Endothelial cell of umbilical vein (primary cell): ENCODE measurements at regions of chr3 and their contacts with region 1.

Region 1: DNA sequence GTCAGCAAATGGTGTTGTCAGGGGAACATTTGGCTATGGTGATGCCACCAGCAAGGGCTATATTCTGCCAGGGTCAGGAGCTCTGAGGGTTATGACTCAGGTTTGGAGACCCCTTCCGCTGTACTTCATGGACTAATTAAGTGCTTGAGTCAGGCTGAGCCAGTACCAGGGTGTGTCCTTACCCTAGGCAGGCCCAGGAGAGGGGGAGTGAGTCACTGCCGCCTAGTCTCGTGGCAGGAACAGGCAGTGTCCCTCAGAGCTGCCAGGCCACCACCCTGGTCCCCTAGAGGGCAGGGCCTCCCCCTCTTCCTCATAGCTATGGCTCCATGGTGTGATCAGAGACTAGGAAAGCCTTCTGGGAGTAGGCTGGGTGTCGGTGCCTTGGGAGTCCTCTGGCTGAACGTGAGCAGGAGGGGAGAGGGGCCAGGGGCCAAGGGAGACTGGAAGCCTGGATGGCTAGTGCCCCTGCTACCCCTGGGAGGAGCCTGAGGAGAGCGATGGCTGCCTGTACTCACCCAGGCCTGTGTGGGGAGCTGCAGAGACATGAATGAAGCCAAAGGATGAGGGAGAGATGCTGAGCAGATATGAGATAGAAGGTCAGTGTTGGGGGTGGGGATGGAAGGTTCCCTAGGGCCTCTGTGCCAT is 10.6 kb downstream of the MAPKAPK3 start:
- DNase-seq: peak; percentile 18
- H3K4me3 ChIP-seq: no peak overlapping the region
- H3K27ac ChIP-seq: no peak overlapping the region
- H3K4me1 ChIP-seq: peaks cover 7% of the 10 kb centered on the region
- H3K27me3 ChIP-seq: no peaks in the 10 kb centered on the region
- CTCF ChIP-seq: peak in 1 of 2 donors; percentile 18
- POLR2A ChIP-seq: no peak

Region 2: GRCh38 chr3:50415066-50415465 is 212.5 kb before region 1 on chr3:
- CTCF ChIA-PET with region 1: no interaction called
- POLR2A ChIA-PET with region 1: no interaction called
- dilution Hi-C with region 1: no loop called
- intact Hi-C with region 1: no loop called
- DNase-seq: no peak
- H3K4me3 ChIP-seq: no peak overlapping the region
- H3K27ac ChIP-seq: no peak overlapping the region
- H3K4me1 ChIP-seq: no peaks in the 10 kb centered on the region
- H3K27me3 ChIP-seq: peaks cover 0 to 2% of the 10 kb centered on the region in 2 experiments
- CTCF ChIP-seq: no peak
- POLR2A ChIP-seq: no peak

Region 3: DNA sequence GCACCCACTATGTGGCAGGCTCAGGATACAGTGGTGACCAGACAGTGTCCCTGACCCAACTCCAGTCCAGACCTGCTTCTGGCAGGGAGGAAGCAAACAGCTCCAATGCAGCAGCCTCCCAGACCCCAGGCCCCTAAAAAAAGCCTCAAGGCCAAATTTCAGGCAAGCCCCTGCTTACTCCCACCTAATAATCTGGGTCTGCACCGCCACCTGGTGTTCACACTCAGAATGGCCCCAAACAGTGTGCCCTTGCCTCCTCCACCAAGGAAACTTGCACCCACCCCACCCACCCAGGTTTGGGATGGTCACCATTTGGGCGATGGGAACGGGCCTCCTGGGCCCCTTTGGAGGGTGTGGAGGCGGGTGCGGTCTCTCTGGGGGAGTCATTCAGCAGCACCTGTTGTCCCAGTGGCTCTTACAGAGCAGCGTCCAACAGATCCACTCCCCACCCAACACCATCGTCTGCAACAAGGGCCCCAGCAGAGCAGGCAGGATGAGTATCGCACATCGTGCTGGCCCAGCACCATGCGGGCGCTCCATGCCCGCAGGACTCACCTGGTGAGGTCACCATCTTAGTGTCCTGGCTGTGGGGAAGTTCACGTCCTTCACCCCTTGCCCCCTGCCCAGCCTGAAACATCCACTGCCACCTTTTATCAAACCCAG is 77.3 kb before region 1 on chr3:
- CTCF ChIA-PET with region 1: no interaction called
- POLR2A ChIA-PET with region 1: no interaction called
- dilution Hi-C with region 1: no loop called
- intact Hi-C with region 1: no loop called
- DNase-seq: peak; percentile 52
- H3K4me3 ChIP-seq: no peak overlapping the region
- H3K27ac ChIP-seq: no peak overlapping the region
- H3K4me1 ChIP-seq: no peaks in the 10 kb centered on the region
- H3K27me3 ChIP-seq: no peaks in the 10 kb centered on the region
- CTCF ChIP-seq: peak; percentile 49 to 77
- POLR2A ChIP-seq: no peak

Region 4: GRCh38 chr3:50652709-50653108 is 25.2 kb after region 1 on chr3:
- CTCF ChIA-PET with region 1: interaction called, 20 read pairs
- POLR2A ChIA-PET with region 1: no interaction called
- dilution Hi-C with region 1: no loop called
- intact Hi-C with region 1: no loop called
- DNase-seq: peak; percentile 17
- H3K4me3 ChIP-seq: no peak overlapping the region
- H3K27ac ChIP-seq: no peak overlapping the region
- H3K4me1 ChIP-seq: no peaks in the 10 kb centered on the region
- H3K27me3 ChIP-seq: no peaks in the 10 kb centered on the region
- CTCF ChIP-seq: peak; percentile 19 to 37
- POLR2A ChIP-seq: no peak